H1 (cell line): ENCODE measurements at regions of chr17 and their contacts with region 1.

Region 1: GRCh38 chr17:61451538-61452300 is 503 bp upstream of the TBX4 start:
- DNase-seq: peak in 1 of 2 experiments; percentile 83
- H3K4me3 ChIP-seq: peak overlapping the region; percentile 16 to 59 (median 18); a peak in 6 of 8 replicates
- H3K27ac ChIP-seq: no peak overlapping the region
- H3K4me1 ChIP-seq: peaks cover 0 to 26% (median 10%) of the 10 kb centered on the region in 4 experiments; a peak in 5 of 7 replicates
- H3K27me3 ChIP-seq: peaks cover 63 to 90% (median 71%) of the 10 kb centered on the region in 4 experiments
- CTCF ChIP-seq: no peak
- EP300 ChIP-seq: no peak
- POLR2A ChIP-seq: no peak
- RAD21 ChIP-seq: no peak

Region 2: GRCh38 chr17:61201232-61201640 is 250.5 kb before region 1 on chr17:
- CTCF ChIA-PET with region 1: no interaction called
- POLR2A ChIA-PET with region 1: no interaction called
- DNase-seq: no peak
- H3K4me3 ChIP-seq: no peak overlapping the region
- H3K27ac ChIP-seq: no peak overlapping the region
- H3K4me1 ChIP-seq: peaks cover 0 to 4% (median 2%) of the 10 kb centered on the region in 4 experiments; a peak in 5 of 7 replicates
- H3K27me3 ChIP-seq: no peaks in the 10 kb centered on the region
- CTCF ChIP-seq: no peak
- EP300 ChIP-seq: no peak
- POLR2A ChIP-seq: no peak
- RAD21 ChIP-seq: no peak

Region 3: GRCh38 chr17:61420052-61420451 is 31.7 kb before region 1 on chr17:
- CTCF ChIA-PET with region 1: interaction called, 52 read pairs
- POLR2A ChIA-PET with region 1: interaction called, 4 read pairs
- DNase-seq: peak in 1 of 2 experiments; percentile 30
- H3K4me3 ChIP-seq: no peak overlapping the region
- H3K27ac ChIP-seq: no peak overlapping the region
- H3K4me1 ChIP-seq: peaks cover 0 to 4% (median 0%) of the 10 kb centered on the region in 4 experiments; a peak in 2 of 7 replicates
- H3K27me3 ChIP-seq: peaks cover 0 to 22% (median 18%) of the 10 kb centered on the region in 4 experiments; a peak in 6 of 7 replicates
- CTCF ChIP-seq: no peak
- EP300 ChIP-seq: no peak
- POLR2A ChIP-seq: no peak
- RAD21 ChIP-seq: no peak

Region 4: GRCh38 chr17:61426013-61426730 is 25.5 kb before region 1 on chr17:
- CTCF ChIA-PET with region 1: interaction called, 25 read pairs
- POLR2A ChIA-PET with region 1: interaction called, 4 read pairs
- DNase-seq: peak in 1 of 2 experiments; percentile 67
- H3K4me3 ChIP-seq: no peak overlapping the region
- H3K27ac ChIP-seq: no peak overlapping the region
- H3K4me1 ChIP-seq: peaks cover 0 to 4% (median 2%) of the 10 kb centered on the region in 4 experiments; a peak in 3 of 7 replicates
- H3K27me3 ChIP-seq: no peaks in the 10 kb centered on the region; a peak in 1 of 7 replicates
- CTCF ChIP-seq: peak; percentile 49 to 73 (median 69)
- EP300 ChIP-seq: no peak
- POLR2A ChIP-seq: no peak
- RAD21 ChIP-seq: peak; percentile 68 to 81

Region 5: DNA sequence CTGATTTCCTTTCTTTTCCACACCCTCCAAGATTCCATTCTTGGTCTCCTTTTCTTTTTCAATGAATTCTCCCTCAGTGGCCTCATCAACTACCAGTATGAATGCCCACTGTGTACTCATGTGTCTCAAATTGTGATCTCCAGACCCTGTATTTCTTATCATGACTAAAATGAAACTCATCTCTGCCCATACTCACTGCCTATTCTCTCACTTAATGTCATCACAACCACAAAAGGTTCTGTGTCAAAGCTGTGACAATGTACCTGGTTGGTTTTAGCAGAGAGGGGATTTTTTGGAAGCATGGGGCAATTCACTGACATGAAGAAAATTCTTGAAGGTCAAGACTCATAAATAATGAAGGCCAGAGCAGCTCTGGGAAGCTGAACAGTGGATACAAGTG is 11.0 kb before region 1 on chr17:
- CTCF ChIA-PET with region 1: interaction called, 19 read pairs
- POLR2A ChIA-PET with region 1: interaction called, 7 read pairs
- DNase-seq: no peak
- H3K4me3 ChIP-seq: no peak overlapping the region
- H3K27ac ChIP-seq: no peak overlapping the region
- H3K4me1 ChIP-seq: 0 out of 7 replicates have a peak, but pooled peaks cover 0 to 3% (median 0%) of the 10 kb centered on the region in 4 experiments
- H3K27me3 ChIP-seq: no peaks in the 10 kb centered on the region
- CTCF ChIP-seq: no peak
- EP300 ChIP-seq: no peak
- POLR2A ChIP-seq: no peak
- RAD21 ChIP-seq: no peak